Ascending aorta (tissue), 2 donors: ENCODE measurements at regions of chr4 and their contacts with region 1.

Region 1: GRCh38 chr4:138870737-138871554 is 144.6 kb upstream of the NOCT start:
- DNase-seq: peak in 1 of 2 donors; percentile 77
- H3K4me3 ChIP-seq: no peak overlapping the region
- H3K27ac ChIP-seq: no peak overlapping the region
- H3K4me1 ChIP-seq: no peaks in the 10 kb centered on the region
- H3K27me3 ChIP-seq: no peaks in the 10 kb centered on the region
- CTCF ChIP-seq: peak; percentile 60 to 82 (median 75)

Region 2: GRCh38 chr4:138035781-138036258 is 835.1 kb before region 1 on chr4:
- intact Hi-C with region 1: loop called (anchors 10 kb)
- DNase-seq: peak in 1 of 2 donors; percentile 59
- H3K4me3 ChIP-seq: no peak overlapping the region
- H3K27ac ChIP-seq: no peak overlapping the region
- H3K4me1 ChIP-seq: no peaks in the 10 kb centered on the region
- H3K27me3 ChIP-seq: no peaks in the 10 kb centered on the region
- CTCF ChIP-seq: peak; percentile 45 to 70 (median 50)

Region 3: DNA sequence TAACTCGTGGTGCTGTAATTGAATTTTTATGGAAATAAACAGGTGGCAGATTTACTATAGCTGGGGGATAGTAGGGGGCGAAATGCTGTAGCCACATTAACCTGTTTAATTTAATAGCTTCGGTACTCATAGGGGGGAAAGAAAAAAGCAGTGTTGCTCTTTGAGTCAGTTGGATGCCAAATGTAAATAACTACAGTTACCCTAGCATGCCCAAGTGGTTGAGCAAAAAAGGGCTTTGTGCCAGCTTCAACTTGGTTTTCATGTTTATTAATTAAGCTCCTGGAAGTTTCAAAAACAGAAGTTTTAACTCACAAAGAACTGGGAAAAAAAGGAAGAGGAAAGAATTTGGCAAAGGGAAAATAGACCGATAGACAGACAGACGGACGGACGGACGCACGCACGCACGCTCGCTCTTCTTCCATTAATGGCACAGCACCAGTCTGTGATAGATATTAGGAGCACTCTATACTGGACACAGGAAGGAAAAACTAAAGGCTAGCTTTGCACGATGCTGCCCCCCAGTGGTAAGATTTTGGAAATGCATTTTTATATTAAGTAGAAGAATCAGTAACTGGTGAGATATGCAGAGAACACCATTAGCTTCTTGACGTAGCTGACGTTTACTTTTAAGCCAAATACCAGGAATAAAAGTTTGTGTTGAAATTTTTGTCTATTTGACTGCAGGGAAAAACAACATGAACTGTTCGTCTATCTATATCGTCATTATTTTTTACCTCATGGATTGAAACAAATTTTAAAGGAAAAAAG is 780.6 kb before region 1 on chr4:
- intact Hi-C with region 1: loop called (anchors 5 kb)
- DNase-seq: peak in 1 of 2 donors; percentile 68
- H3K4me3 ChIP-seq: peak overlapping the region; percentile 39 to 48
- H3K27ac ChIP-seq: no peak overlapping the region
- H3K4me1 ChIP-seq: peaks cover 2% of the 10 kb centered on the region in 2 donors
- H3K27me3 ChIP-seq: no peaks in the 10 kb centered on the region
- CTCF ChIP-seq: peak; percentile 50 to 79 (median 73)